ENCODE measurements at regions of chr20 and their contacts with region 1.

Region 1: GRCh38 chr20:63009045-63009961 is 2.5 kb upstream of the BHLHE23 start:
- DNase-seq: peak; percentile 58 to 86 (median 74)
- H3K4me3 ChIP-seq: no peak overlapping the region
- H3K27ac ChIP-seq: no peak overlapping the region
- H3K4me1 ChIP-seq: peaks cover 0 to 7% of the 10 kb centered on the region in 2 donors
- H3K27me3 ChIP-seq: peaks cover 91% of the 10 kb centered on the region
- CTCF ChIP-seq: peak; percentile 84 to 96 (median 92)
- POLR2A ChIP-seq: no peak

Region 2: GRCh38 chr20:62874745-62875344 is 134.5 kb before region 1 on chr20:
- intact Hi-C with region 1: loop called in 1 of 2 experiments (anchors 5 kb)
- DNase-seq: peak in 3 of 7 donors; percentile 19 to 34 (median 30)
- H3K4me3 ChIP-seq: no peak overlapping the region
- H3K27ac ChIP-seq: peak overlapping the region; percentile 65 to 87 (median 80)
- H3K4me1 ChIP-seq: peaks cover 0 to 16% of the 10 kb centered on the region in 2 donors
- H3K27me3 ChIP-seq: no peaks in the 10 kb centered on the region
- CTCF ChIP-seq: no peak
- POLR2A ChIP-seq: no peak

Region 3: DNA sequence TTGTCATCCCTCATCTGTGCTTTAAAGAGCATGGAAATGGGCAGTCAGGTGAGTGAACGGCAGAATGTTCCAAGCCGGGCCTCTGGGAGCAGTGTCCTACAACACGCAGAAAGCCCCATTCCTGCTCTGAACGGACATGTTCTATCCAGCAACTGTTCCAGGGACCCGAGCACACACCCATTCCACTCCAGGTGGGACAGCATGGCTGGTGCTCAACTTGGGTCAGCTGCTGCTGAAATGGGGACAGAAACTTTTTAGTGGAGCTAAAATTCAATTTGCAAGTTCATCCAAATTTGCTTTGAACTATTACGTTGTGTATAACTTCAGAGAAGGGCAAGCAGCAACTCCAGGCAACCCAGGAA is 109.6 kb before region 1 on chr20:
- intact Hi-C with region 1: loop called in 1 of 2 experiments (anchors 10 kb)
- DNase-seq: peak in 2 of 7 donors; percentile 32 to 47
- H3K4me3 ChIP-seq: no peak overlapping the region
- H3K27ac ChIP-seq: no peak overlapping the region
- H3K4me1 ChIP-seq: peaks cover 0 to 18% of the 10 kb centered on the region in 2 donors
- H3K27me3 ChIP-seq: no peaks in the 10 kb centered on the region
- CTCF ChIP-seq: peak in 1 of 6 experiments; percentile 23
- POLR2A ChIP-seq: no peak

Region 4: GRCh38 chr20:62970307-62971210 is 38.7 kb before region 1 on chr20:
- intact Hi-C with region 1: loop called in 1 of 2 experiments (anchors 2 kb)
- DNase-seq: no peak
- H3K4me3 ChIP-seq: no peak overlapping the region
- H3K27ac ChIP-seq: no peak overlapping the region
- H3K4me1 ChIP-seq: peaks cover 0 to 8% of the 10 kb centered on the region in 2 donors
- H3K27me3 ChIP-seq: peaks cover 27% of the 10 kb centered on the region
- CTCF ChIP-seq: no peak
- POLR2A ChIP-seq: no peak

Region 5: GRCh38 chr20:63116412-63117099 is 107.3 kb after region 1 on chr20:
- intact Hi-C with region 1: no loop called
- DNase-seq: peak in 4 of 7 donors; percentile 20 to 29 (median 22)
- H3K4me3 ChIP-seq: no peak overlapping the region
- H3K27ac ChIP-seq: no peak overlapping the region
- H3K4me1 ChIP-seq: no peaks in the 10 kb centered on the region
- H3K27me3 ChIP-seq: peaks cover 13% of the 10 kb centered on the region
- CTCF ChIP-seq: no peak
- POLR2A ChIP-seq: no peak

Region 6: GRCh38 chr20:63196768-63197470 is 187.6 kb after region 1 on chr20:
- intact Hi-C with region 1: no loop called
- DNase-seq: peak in 2 of 7 donors; percentile 16 to 41
- H3K4me3 ChIP-seq: no peak overlapping the region
- H3K27ac ChIP-seq: no peak overlapping the region
- H3K4me1 ChIP-seq: peaks cover 0 to 19% of the 10 kb centered on the region in 2 donors
- H3K27me3 ChIP-seq: no peaks in the 10 kb centered on the region
- CTCF ChIP-seq: no peak
- POLR2A ChIP-seq: no peak